IMR-90 (cell line): ENCODE measurements at regions of chrX and their contacts with region 1.

Region 1: DNA sequence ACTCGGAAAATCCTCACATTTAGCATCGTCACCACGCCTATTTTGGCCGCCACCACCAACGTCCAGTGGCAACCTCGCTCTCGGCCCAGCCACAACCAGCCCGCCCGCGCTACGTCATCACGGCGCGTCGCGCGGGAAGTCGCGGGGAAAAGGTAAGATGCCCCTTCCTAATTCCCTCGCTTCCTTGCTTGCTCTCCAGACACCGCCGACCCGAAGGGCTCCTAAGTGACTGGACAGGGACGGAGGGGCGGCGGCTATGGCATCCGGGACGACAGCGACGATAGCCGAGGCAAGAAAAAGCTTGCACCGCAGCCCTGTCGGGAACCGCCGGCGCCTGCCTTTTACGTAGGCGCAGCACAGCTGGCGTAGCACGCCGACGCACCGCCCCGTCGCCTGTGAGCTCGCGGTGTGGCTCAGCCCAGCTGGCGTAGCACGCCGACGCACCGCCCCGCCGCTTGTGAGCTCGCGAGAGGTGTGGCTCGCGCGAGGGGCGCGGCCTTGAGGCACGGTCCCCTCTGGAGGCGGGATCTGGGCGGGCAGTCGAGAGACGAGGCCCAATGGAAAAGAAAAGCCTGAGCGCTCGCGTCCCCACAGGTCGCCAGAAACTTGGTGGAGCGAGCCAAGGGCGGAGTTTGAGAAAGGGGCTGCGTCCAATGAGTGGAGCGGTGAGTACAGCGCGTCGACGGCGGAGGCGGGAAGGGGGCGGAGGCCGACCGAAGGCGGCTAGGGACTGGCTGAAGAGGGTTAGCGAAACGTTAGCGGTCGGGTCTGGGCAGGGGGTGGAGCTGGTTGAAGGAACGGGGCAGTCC is at the start of gene HDAC6:
- DNase-seq: peak; percentile 98
- ATAC-seq: peak; percentile 88
- H3K4me3 ChIP-seq: peak within 1 kb of the TSS; percentile 84
- H3K27ac ChIP-seq: peak within 1 kb of the TSS; percentile 89
- H3K4me1 ChIP-seq: 0 out of 2 replicates have a peak, but pooled peaks cover 3% of the 10 kb centered on the region
- H3K27me3 ChIP-seq: no peaks in the 10 kb centered on the region
- CTCF ChIP-seq: no peak
- POLR2A ChIP-seq: no peak
- RAD21 ChIP-seq: no peak
- total RNA-seq, gene HDAC6: 14.7 and 16.8 TPM in 2 replicates

Region 2: GRCh38 chrX:47898024-47898423 is 903.5 kb before region 1 on chrX:
- CTCF ChIA-PET with region 1: no interaction called
- POLR2A ChIA-PET with region 1: no interaction called
- dilution Hi-C with region 1: no loop called
- in situ Hi-C with region 1: no loop called
- intact Hi-C with region 1: loop called (anchors 10 kb)
- DNase-seq: no peak
- ATAC-seq: no peak
- H3K4me3 ChIP-seq: no peak overlapping the region
- H3K27ac ChIP-seq: no peak overlapping the region
- H3K4me1 ChIP-seq: no peaks in the 10 kb centered on the region
- H3K27me3 ChIP-seq: no peaks in the 10 kb centered on the region
- CTCF ChIP-seq: no peak
- POLR2A ChIP-seq: no peak
- RAD21 ChIP-seq: no peak

Region 3: GRCh38 chrX:48715072-48715471 is 86.4 kb before region 1 on chrX:
- CTCF ChIA-PET with region 1: no interaction called
- POLR2A ChIA-PET with region 1: no interaction called
- dilution Hi-C with region 1: no loop called
- in situ Hi-C with region 1: no loop called
- intact Hi-C with region 1: no loop called
- DNase-seq: peak; percentile 58
- ATAC-seq: no peak
- H3K4me3 ChIP-seq: no peak overlapping the region
- H3K27ac ChIP-seq: no peak overlapping the region
- H3K4me1 ChIP-seq: 0 out of 2 replicates have a peak, but pooled peaks cover 2% of the 10 kb centered on the region
- H3K27me3 ChIP-seq: peaks cover 1% of the 10 kb centered on the region
- CTCF ChIP-seq: no peak
- POLR2A ChIP-seq: no peak
- RAD21 ChIP-seq: no peak

Region 4: DNA sequence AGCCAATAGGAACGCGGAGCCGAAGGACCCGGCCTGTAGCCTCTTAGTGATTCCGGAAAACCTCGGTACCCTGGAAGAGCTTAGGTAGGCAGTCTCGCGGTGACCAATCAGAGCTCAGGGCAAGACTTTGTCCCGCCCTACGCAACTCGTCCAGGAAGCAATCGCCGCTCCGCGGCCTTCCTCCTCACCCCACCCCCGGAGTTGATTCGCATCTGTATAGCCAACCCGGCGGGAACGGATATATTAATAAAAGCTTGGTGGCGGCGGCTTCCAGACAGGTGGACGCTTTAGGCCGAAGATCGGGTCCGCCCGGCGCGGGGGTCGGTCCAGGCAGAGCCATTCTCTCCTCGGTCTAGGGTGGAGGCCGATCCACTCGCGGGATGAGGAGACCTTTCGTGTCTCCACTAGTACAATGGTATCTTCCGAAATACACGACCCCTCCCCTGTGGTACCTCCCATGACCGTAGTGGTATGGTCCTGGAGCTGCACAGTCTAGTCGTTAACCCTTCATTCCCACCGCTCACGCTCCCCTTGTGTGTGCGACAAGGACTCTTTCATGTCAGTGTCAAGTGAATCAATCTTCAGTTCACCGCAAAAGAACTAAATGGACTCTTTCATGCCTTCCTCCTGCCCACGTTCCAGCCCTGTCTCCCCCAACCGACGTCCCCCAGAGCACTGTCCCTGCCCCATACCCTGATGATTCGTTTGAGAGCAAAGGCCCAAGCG is 64.1 kb before region 1 on chrX:
- CTCF ChIA-PET with region 1: no interaction called
- POLR2A ChIA-PET with region 1: no interaction called
- dilution Hi-C with region 1: no loop called
- in situ Hi-C with region 1: no loop called
- intact Hi-C with region 1: loop called (anchors 1 kb)
- DNase-seq: peak; percentile 97
- ATAC-seq: peak; percentile 100
- H3K4me3 ChIP-seq: peak overlapping the region; percentile 53
- H3K27ac ChIP-seq: peak overlapping the region; percentile 70
- H3K4me1 ChIP-seq: no peaks in the 10 kb centered on the region
- H3K27me3 ChIP-seq: no peaks in the 10 kb centered on the region; the same call in 1 of the 2 replicates
- CTCF ChIP-seq: no peak
- POLR2A ChIP-seq: peak; percentile 50; the same call in 1 of the 2 replicates
- RAD21 ChIP-seq: no peak

Region 5: GRCh38 chrX:48981178-48981577 is 179.7 kb after region 1 on chrX:
- CTCF ChIA-PET with region 1: no interaction called
- POLR2A ChIA-PET with region 1: no interaction called
- dilution Hi-C with region 1: no loop called
- in situ Hi-C with region 1: no loop called
- intact Hi-C with region 1: no loop called
- DNase-seq: no peak
- ATAC-seq: no peak
- H3K4me3 ChIP-seq: no peak overlapping the region
- H3K27ac ChIP-seq: no peak overlapping the region
- H3K4me1 ChIP-seq: no peaks in the 10 kb centered on the region
- H3K27me3 ChIP-seq: no peaks in the 10 kb centered on the region
- CTCF ChIP-seq: no peak
- POLR2A ChIP-seq: no peak
- RAD21 ChIP-seq: no peak

Region 6: DNA sequence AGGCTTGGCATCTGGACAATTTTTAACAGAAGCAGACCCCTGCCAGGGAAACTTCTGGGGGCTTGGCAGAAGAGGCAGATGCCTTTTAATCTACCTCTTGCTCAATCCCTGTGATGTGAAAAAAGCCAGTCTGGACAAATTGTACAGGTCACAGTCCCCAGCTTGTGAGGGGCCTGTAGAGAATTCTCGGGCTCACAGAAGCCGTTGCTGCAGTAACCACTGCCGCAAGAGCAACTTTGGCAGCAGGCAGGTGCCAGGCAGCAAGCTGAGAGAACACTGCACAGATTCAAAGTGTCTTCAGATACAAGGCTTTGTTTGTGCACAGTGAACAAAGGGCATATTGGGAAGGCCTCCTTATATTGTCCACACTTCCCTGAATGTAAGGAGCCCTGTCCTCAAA is 310.3 kb after region 1 on chrX:
- CTCF ChIA-PET with region 1: no interaction called
- POLR2A ChIA-PET with region 1: no interaction called
- dilution Hi-C with region 1: no loop called
- in situ Hi-C with region 1: no loop called
- intact Hi-C with region 1: no loop called
- DNase-seq: no peak
- ATAC-seq: no peak
- H3K4me3 ChIP-seq: no peak overlapping the region
- H3K27ac ChIP-seq: no peak overlapping the region
- H3K4me1 ChIP-seq: no peaks in the 10 kb centered on the region
- H3K27me3 ChIP-seq: no peaks in the 10 kb centered on the region
- CTCF ChIP-seq: no peak
- POLR2A ChIP-seq: no peak
- RAD21 ChIP-seq: no peak